Common myeloid progenitor, CD34-positive (primary cell): ENCODE measurements at regions of chr13 and their contacts with region 1.

Region 1: DNA sequence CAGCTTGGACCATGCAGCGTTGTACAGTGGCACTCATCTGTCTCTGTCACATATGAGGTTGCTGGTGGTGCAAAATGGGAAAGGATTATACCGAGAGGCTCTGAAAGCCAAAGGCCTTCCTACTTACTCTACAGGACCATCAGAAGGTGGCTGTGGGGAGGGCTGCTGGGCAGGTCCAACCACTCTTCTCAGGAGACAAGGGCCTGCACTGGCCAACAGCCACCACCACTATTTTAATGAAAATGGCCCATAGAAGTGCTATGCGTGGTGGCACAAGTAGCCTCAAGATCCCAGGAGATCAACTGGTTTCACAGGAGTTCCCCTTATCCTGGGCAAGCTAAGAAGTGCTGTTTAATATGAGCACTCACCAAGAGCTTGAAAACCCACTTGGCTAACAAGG is 52.3 kb downstream of the MRPL57 start:
- DNase-seq: no peak
- H3K4me3 ChIP-seq: no peak overlapping the region
- H3K27ac ChIP-seq: no peak overlapping the region
- H3K4me1 ChIP-seq: peaks cover 0 to 12% (median 3%) of the 10 kb centered on the region in 4 experiments
- H3K27me3 ChIP-seq: no peaks in the 10 kb centered on the region

Region 2: GRCh38 chr13:20525690-20526544 is 702.8 kb before region 1 on chr13 and contains the start of gene CRYL1:
- CTCF ChIA-PET with region 1: no interaction called
- POLR2A ChIA-PET with region 1: no interaction called
- DNase-seq: peak; percentile 58 to 96 (median 93)
- H3K4me3 ChIP-seq: peak within 1 kb of the TSS; percentile 71 to 91 (median 73)
- H3K27ac ChIP-seq: peak within 1 kb of the TSS; percentile 47 to 69
- H3K4me1 ChIP-seq: peaks cover 2 to 22% (median 19%) of the 10 kb centered on the region in 4 experiments
- H3K27me3 ChIP-seq: no peaks in the 10 kb centered on the region

Region 3: DNA sequence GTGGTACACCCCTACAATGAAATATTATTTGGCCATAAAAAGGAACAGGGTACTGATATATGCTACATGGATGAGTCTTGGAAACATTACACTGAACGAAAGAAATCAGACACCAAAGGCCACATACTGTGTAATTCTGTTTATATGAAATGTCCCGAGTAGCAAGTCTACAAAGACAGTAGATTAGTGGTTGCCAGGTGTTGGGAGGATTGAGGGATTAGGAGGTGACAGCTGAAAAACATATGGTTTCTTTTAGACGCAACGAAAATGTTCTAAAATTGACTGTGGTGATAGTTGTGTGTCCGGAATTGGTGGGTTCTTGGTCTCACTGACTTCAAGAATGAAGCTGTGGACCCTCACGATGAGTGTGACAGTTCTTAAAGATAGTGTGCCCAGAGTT is 490.1 kb before region 1 on chr13:
- CTCF ChIA-PET with region 1: no interaction called
- POLR2A ChIA-PET with region 1: no interaction called
- DNase-seq: no peak
- H3K4me3 ChIP-seq: no peak overlapping the region
- H3K27ac ChIP-seq: no peak overlapping the region
- H3K4me1 ChIP-seq: no peaks in the 10 kb centered on the region
- H3K27me3 ChIP-seq: no peaks in the 10 kb centered on the region

Region 4: DNA sequence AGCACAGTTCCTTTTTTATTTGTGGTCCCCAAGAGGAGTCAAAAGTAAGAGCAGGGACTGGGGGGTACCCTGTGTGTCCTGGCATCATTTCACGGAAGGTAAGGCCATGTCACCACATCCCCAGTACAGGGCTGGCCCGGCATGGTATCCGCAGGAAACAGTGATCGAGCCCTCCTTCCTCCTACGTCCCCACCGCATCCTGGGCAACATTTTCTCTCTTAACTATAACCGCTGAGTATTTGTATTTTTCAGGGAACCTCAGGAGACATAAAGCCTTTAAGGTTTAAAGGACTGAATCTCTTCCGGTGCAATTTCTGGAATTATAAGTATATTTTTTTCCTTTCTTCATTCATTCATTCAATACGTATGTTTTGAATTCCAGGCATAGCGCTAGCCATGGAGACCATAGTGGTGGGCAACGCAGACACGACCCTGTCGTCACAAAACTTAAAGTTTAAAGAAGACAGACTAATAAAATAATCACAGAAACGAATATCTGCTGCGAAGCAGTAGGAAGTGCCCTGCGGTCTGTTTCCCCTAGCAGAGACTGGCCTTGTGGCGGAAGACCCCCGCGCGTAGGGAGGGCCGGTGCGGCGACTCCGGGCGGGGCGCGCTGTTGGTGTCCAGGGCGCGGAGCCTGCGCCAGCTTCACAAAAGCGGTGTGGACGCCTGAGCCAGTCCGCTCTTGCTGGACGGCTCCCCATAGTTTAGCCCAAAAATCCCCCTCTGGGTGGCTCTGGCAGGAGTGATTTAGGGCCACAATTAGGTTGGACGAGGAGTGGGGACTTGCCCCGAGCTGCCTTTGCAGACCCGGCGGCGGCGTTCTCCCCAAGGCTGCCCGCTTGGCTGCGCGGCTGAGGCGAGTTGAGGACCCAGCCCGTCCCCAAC is 153.5 kb before region 1 on chr13:
- CTCF ChIA-PET with region 1: no interaction called
- POLR2A ChIA-PET with region 1: no interaction called
- DNase-seq: peak; percentile 95 to 100 (median 99)
- H3K4me3 ChIP-seq: peak overlapping the region; percentile 50 to 84 (median 70)
- H3K27ac ChIP-seq: peak overlapping the region; percentile 94 to 97
- H3K4me1 ChIP-seq: peaks cover 8 to 66% (median 51%) of the 10 kb centered on the region in 4 experiments
- H3K27me3 ChIP-seq: no peaks in the 10 kb centered on the region

Region 5: GRCh38 chr13:21149568-21149967 is 79.2 kb before region 1 on chr13:
- CTCF ChIA-PET with region 1: no interaction called
- POLR2A ChIA-PET with region 1: no interaction called
- DNase-seq: peak in 2 of 3 donors; percentile 34 to 40
- H3K4me3 ChIP-seq: no peak overlapping the region
- H3K27ac ChIP-seq: peak overlapping the region in 1 of 2 experiments; percentile 19
- H3K4me1 ChIP-seq: peaks cover 6 to 17% (median 11%) of the 10 kb centered on the region in 4 experiments
- H3K27me3 ChIP-seq: no peaks in the 10 kb centered on the region

Region 6: GRCh38 chr13:21218351-21219035 is 10.2 kb before region 1 on chr13:
- CTCF ChIA-PET with region 1: interaction called, 10 read pairs
- POLR2A ChIA-PET with region 1: interaction called, 6 read pairs
- DNase-seq: peak; percentile 77 to 99 (median 98)
- H3K4me3 ChIP-seq: peak overlapping the region in 3 of 7 experiments; percentile 3 to 39 (median 17)
- H3K27ac ChIP-seq: peak overlapping the region; percentile 96 to 97
- H3K4me1 ChIP-seq: peaks cover 9 to 58% (median 46%) of the 10 kb centered on the region in 4 experiments
- H3K27me3 ChIP-seq: no peaks in the 10 kb centered on the region